OCI-LY7 (cell line): ENCODE measurements at regions of chr5 and their contacts with region 1.

Region 1: GRCh38 chr5:149636851-149637246 is 55.6 kb downstream of the ARHGEF37 start:
- DNase-seq: peak; percentile 59
- H3K4me3 ChIP-seq: no peak overlapping the region
- H3K27ac ChIP-seq: no peak overlapping the region
- H3K4me1 ChIP-seq: peaks cover 18% of the 10 kb centered on the region
- CTCF ChIP-seq: peak; percentile 96

Region 2: GRCh38 chr5:149392718-149393117 is 244.1 kb before region 1 on chr5:
- CTCF ChIA-PET with region 1: no interaction called
- POLR2A ChIA-PET with region 1: no interaction called
- intact Hi-C with region 1: no loop called
- DNase-seq: no peak
- H3K4me3 ChIP-seq: no peak overlapping the region
- H3K27ac ChIP-seq: no peak overlapping the region
- H3K4me1 ChIP-seq: no peaks in the 10 kb centered on the region
- CTCF ChIP-seq: no peak

Region 3: GRCh38 chr5:149697001-149697400 is 60.2 kb after region 1 on chr5:
- CTCF ChIA-PET with region 1: interaction called, 18 read pairs
- POLR2A ChIA-PET with region 1: no interaction called
- intact Hi-C with region 1: no loop called
- DNase-seq: no peak
- H3K4me3 ChIP-seq: no peak overlapping the region
- H3K27ac ChIP-seq: no peak overlapping the region
- H3K4me1 ChIP-seq: no peaks in the 10 kb centered on the region
- CTCF ChIP-seq: no peak

Region 4: GRCh38 chr5:149828161-149828884 is 191.5 kb after region 1 on chr5:
- CTCF ChIA-PET with region 1: interaction called, 5 read pairs
- POLR2A ChIA-PET with region 1: no interaction called
- intact Hi-C with region 1: loop called (anchors 1 kb)
- DNase-seq: peak; percentile 87
- H3K4me3 ChIP-seq: no peak overlapping the region
- H3K27ac ChIP-seq: no peak overlapping the region
- H3K4me1 ChIP-seq: peaks cover 3% of the 10 kb centered on the region
- CTCF ChIP-seq: peak; percentile 91

Region 5: DNA sequence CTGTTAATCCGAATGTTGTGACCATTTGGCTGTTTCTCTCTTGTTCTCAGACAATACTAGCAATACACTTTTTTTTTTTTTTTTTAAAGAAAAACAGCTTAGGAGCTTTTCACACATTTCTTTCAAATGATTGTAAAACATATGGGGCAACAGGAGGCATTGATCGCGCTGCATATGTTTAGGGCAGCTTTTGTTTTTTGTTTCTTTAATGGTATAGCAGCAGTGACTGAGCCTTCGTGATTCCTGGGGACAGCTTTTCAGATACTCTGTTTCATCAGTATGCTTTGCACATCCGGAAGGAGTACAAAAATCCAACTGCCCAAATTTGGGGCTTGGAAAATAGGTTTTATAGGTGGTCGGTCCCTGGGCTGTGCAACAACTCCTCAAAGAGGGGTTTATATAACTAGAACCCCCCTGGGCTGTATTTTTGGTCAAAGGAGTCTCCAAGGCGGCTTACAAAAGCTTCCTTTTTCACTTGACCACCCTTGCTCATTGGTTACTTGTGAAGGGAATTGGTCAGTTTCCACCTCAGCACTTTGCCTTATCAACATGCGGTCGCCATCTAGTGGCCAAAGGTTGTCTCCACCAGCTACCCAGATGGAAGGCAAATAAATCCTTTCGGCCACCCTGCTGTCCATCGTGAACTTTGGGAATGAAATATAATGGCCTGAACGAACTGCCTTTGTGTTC is 215.9 kb after region 1 on chr5:
- CTCF ChIA-PET with region 1: no interaction called
- POLR2A ChIA-PET with region 1: interaction called, 3 read pairs
- intact Hi-C with region 1: loop called (anchors 1 kb)
- DNase-seq: peak; percentile 66
- H3K4me3 ChIP-seq: no peak overlapping the region
- H3K27ac ChIP-seq: no peak overlapping the region
- H3K4me1 ChIP-seq: no peaks in the 10 kb centered on the region
- CTCF ChIP-seq: peak; percentile 95

Region 6: DNA sequence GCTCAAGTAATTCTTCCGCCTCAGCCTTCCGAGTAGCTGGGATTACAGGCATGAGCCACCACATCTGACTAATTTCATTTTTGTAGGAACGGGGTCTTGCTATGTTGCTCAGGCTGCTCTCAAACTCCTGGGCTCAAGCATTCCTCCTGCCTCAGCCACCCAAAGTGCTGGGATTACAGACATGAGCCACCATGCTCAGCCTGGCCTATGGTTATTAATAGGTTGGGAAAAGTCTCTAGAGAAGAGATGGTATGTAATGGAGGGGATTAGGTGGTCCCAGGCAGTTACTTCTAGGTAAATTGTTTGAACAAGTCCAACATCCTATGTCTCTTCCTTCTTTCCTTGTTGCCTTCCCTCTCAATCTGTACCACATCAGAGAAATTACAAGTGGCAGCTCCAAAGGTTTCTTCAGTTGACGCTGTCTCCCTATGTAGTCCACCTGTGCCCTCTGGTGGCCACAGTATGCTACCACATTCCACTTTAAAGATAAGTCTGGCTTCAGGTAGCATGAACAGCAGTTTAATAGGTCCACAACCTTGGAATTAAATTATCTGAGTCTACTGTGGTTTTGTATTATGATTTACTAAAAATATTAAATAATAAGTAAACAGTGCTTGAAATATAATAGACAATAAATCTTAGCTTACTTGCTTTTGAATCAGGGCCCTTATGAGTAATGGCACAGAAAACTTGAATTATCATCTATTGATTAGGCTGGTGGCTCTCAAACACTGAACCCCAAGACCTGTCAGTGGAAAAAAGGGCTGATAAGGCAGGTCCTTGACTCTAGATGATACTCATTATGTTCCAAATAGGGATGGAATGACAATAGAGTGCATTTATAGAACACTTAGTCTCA is 353.9 kb after region 1 on chr5:
- CTCF ChIA-PET with region 1: interaction called, 4 read pairs
- POLR2A ChIA-PET with region 1: no interaction called
- intact Hi-C with region 1: loop called (anchors 2 kb)
- DNase-seq: peak; percentile 74
- H3K4me3 ChIP-seq: no peak overlapping the region
- H3K27ac ChIP-seq: no peak overlapping the region
- H3K4me1 ChIP-seq: no peaks in the 10 kb centered on the region
- CTCF ChIP-seq: peak; percentile 97